OCI-LY7 (cell line): ENCODE measurements at regions of chr2 and their contacts with region 1.

Region 1: DNA sequence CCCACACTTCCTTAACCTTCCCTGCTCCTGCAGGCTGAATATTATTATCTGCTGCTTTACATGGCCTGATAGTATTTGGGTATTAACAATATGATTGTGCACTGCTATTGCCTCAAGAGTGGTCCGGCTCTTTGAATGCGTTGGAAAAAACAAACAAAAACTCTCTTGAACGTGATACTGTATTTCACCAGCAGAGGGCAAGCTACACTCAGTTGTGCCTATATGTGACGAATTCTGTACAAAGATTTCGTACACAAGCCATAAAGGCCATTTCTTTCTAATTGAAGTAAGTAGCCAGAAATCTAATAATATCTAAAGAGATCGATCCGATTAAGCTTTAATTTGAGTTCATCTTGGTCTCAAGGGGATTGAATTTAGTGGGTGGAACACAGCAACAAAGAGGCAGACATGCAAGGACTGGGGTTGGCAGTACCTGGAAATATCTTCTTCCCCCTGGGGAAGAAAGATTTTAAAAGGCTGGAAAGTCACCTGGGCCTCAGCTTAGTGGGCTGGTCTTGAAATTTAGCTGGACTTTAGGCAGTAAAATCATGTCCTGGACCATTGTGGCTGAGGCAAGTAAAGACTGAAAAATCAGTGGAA is 49.3 kb upstream of the RAB6D start:
- DNase-seq: peak; percentile 74
- H3K4me3 ChIP-seq: no peak overlapping the region
- H3K27ac ChIP-seq: no peak overlapping the region
- H3K4me1 ChIP-seq: no peaks in the 10 kb centered on the region
- CTCF ChIP-seq: peak; percentile 97

Region 2: GRCh38 chr2:131154071-131154531 is 259.1 kb before region 1 on chr2:
- CTCF ChIA-PET with region 1: no interaction called
- POLR2A ChIA-PET with region 1: no interaction called
- intact Hi-C with region 1: loop called (anchors 2 kb)
- DNase-seq: peak; percentile 83
- H3K4me3 ChIP-seq: no peak overlapping the region
- H3K27ac ChIP-seq: no peak overlapping the region
- H3K4me1 ChIP-seq: peaks cover 11% of the 10 kb centered on the region
- CTCF ChIP-seq: peak; percentile 93

Region 3: DNA sequence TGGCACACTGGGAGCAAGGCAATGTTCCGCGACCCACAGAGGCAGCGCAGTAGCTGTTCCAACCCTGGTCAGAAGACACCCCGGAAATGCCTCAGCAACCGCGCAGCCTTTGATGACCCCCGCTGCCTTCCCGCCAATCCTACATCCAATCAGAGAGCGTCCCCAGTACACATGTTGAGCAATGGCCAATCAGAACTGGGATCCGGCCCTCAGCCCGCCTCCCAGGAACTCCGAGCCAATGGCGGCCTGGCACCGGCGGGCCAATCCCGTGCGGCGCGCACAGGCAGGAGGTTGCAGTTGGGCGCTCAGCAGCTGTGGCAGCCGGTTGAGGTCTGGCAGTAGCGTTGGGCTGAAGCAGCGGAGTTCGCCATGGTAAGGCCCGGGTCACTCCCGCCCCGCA is 62.6 kb after region 1 on chr2 and contains the start of gene TUBA3D:
- CTCF ChIA-PET with region 1: no interaction called
- POLR2A ChIA-PET with region 1: no interaction called
- intact Hi-C with region 1: no loop called
- DNase-seq: no peak
- H3K4me3 ChIP-seq: no peak within 1 kb of the TSS
- H3K27ac ChIP-seq: no peak within 1 kb of the TSS
- H3K4me1 ChIP-seq: no peaks in the 10 kb centered on the region
- CTCF ChIP-seq: no peak
- total RNA-seq, gene TUBA3D: not detected in 2 replicates